Left ventricle myocardium inferior (tissue), 1 donor: ENCODE measurements at regions of chr17 and their contacts with region 1.

Region 1: DNA sequence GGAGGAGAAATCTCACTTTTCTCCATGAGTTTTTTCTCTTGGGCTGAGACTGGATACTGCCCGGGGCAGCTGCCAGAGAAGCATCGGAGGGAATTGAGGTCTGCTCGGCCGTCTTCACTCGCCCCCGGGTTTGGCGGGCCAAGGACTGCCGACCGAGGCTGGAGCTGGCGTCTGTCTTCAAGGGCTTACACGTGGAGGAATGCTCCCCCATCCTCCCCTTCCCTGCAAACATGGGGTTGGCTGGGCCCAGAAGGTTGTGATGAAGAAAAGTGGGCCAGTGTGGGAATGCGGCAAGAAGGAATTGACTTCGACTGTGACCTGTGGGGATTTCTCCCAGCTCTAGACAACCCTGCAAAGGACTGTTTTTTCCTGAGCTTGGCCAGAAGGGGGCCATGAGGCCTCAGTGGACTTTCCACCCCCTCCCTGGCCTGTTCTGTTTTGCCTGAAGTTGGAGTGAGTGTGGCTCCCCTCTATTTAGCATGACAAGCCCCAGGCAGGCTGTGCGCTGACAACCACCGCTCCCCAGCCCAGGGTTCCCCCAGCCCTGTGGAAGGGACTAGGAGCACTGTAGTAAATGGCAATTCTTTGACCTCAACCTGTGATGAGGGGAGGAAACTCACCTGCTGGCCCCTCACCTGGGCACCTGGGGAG is 19.1 kb downstream of the NGFR start:
- DNase-seq: peak; percentile 76
- H3K4me3 ChIP-seq: peak overlapping the region; percentile 11
- H3K27ac ChIP-seq: peak overlapping the region; percentile 77
- H3K4me1 ChIP-seq: peaks cover 26% of the 10 kb centered on the region
- H3K27me3 ChIP-seq: peaks cover 16% of the 10 kb centered on the region
- CTCF ChIP-seq: no peak

Region 2: DNA sequence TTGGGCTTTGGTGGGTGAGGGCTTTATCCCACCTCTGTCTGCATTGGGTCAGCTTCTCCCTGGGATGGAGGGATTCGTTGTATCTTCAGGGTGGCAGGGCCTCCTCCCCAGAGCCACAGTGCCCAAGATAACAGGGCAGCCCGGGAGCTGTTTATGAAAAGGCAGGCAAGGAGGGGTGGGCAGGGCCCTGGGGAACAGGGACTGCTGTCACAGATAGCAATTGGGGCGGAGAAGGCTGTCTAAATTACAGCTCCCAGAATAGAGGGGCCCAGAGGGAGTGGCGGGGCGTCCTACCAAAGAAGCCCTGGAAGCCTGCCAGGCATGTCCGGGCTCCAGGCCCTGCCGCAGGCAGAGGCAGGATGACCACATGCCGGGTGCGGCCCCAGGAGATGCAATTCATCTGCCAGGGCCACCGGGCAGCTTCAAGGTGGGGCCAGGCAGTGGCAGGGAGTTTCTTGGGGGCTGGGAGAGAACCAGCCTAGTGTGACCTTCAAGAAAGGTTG is 264.9 kb before region 1 on chr17:
- intact Hi-C with region 1: no loop called
- DNase-seq: peak; percentile 60
- H3K4me3 ChIP-seq: no peak overlapping the region
- H3K27ac ChIP-seq: no peak overlapping the region
- H3K4me1 ChIP-seq: peaks cover 11% of the 10 kb centered on the region
- H3K27me3 ChIP-seq: no peaks in the 10 kb centered on the region
- CTCF ChIP-seq: no peak

Region 3: DNA sequence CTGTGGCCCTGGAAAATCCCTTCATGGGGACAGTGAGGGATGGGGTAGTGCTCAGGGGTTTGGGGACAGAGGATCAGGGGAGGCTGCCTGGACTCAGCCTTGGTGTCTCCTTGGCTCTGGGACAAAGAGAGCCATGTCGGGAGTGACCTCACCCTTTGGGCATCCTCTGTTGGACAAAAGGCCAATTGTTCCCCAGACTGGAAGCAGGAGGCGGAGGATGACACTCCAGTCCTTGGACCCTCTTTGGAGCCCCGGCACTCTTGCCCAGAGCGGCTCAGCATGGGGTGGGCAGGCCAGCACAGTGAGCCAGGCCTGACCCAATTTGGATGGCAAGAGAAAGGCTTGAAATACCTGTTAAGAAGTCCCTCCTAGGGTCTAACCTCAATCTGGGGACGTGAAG is 60.1 kb before region 1 on chr17:
- intact Hi-C with region 1: no loop called
- DNase-seq: no peak
- H3K4me3 ChIP-seq: no peak overlapping the region
- H3K27ac ChIP-seq: no peak overlapping the region
- H3K4me1 ChIP-seq: peaks cover 5% of the 10 kb centered on the region
- H3K27me3 ChIP-seq: peaks cover 53% of the 10 kb centered on the region
- CTCF ChIP-seq: no peak

Region 4: GRCh38 chr17:49548506-49549310 is 34.5 kb after region 1 on chr17:
- intact Hi-C with region 1: loop called (anchors 5 kb)
- DNase-seq: peak; percentile 62
- H3K4me3 ChIP-seq: no peak overlapping the region
- H3K27ac ChIP-seq: peak overlapping the region; percentile 30
- H3K4me1 ChIP-seq: no peaks in the 10 kb centered on the region
- H3K27me3 ChIP-seq: peaks cover 48% of the 10 kb centered on the region
- CTCF ChIP-seq: peak; percentile 73

Region 5: GRCh38 chr17:49624896-49625295 is 110.7 kb after region 1 on chr17:
- intact Hi-C with region 1: no loop called
- DNase-seq: no peak
- H3K4me3 ChIP-seq: no peak overlapping the region
- H3K27ac ChIP-seq: no peak overlapping the region
- H3K4me1 ChIP-seq: peaks cover 94% of the 10 kb centered on the region
- H3K27me3 ChIP-seq: no peaks in the 10 kb centered on the region
- CTCF ChIP-seq: no peak